Common myeloid progenitor, CD34-positive (primary cell): ENCODE measurements at regions of chr10 and their contacts with region 1.

Region 1: DNA sequence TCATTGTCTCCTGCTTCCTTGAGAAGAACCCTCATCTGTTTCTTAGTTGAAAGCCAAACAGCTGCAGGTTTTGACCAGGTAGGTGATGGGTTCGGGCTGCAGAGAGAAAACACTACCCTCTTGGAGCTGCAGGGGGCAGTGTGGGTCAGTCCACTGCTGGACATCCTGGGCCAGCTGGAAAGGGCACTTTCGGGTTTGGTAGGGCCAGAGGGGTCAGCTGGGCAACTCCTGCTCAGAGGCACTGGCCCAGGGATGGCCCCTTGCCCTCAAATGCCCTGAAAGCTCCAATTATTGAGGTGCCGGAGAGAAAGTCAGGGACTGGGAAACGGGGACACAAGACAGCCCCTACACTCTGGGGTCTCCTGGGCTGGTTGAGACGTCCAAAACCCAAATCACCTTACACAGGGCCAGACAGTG is 90.7 kb downstream of the MKI67 start:
- DNase-seq: peak in 1 of 3 donors; percentile 50
- H3K4me3 ChIP-seq: no peak overlapping the region
- H3K27ac ChIP-seq: no peak overlapping the region
- H3K4me1 ChIP-seq: no peaks in the 10 kb centered on the region
- H3K27me3 ChIP-seq: peaks cover 0 to 1% (median 0%) of the 10 kb centered on the region in 5 experiments

Region 2: DNA sequence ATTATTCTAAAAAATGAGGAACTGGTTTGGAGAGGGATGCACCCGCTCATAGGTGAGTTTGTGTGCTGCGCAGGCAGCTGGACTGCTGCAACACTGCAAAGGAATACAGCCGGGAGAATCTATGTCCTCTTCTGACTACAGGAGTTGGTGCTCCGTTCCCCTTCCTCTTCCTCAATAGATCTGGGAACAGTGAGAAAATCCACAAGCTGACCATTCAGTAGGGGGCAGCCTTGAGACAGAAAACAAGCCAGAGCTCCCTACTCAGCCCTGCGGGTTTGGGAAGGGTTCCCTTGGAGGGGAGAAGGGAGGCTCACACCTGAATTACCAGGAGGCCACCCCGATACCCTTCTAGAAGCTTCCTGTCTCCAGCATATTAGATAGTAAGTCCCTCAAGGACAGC is 385.9 kb before region 1 on chr10:
- CTCF ChIA-PET with region 1: no interaction called
- POLR2A ChIA-PET with region 1: no interaction called
- DNase-seq: no peak
- H3K4me3 ChIP-seq: no peak overlapping the region
- H3K27ac ChIP-seq: no peak overlapping the region
- H3K4me1 ChIP-seq: no peaks in the 10 kb centered on the region
- H3K27me3 ChIP-seq: peaks cover 0 to 7% (median 0%) of the 10 kb centered on the region in 5 experiments

Region 3: GRCh38 chr10:128047351-128047750 is 11.8 kb after region 1 on chr10:
- CTCF ChIA-PET with region 1: interaction called, 77 read pairs
- POLR2A ChIA-PET with region 1: interaction called, 13 read pairs
- DNase-seq: peak; percentile 79 to 90 (median 86)
- H3K4me3 ChIP-seq: peak overlapping the region in 6 of 7 experiments; percentile 57 to 84 (median 66)
- H3K27ac ChIP-seq: peak overlapping the region; percentile 84 to 91
- H3K4me1 ChIP-seq: peaks cover 33 to 70% (median 46%) of the 10 kb centered on the region in 4 experiments
- H3K27me3 ChIP-seq: no peaks in the 10 kb centered on the region

Region 4: GRCh38 chr10:128064108-128064969 is 28.8 kb after region 1 on chr10:
- CTCF ChIA-PET with region 1: interaction called, 288 read pairs
- POLR2A ChIA-PET with region 1: interaction called, 16 read pairs
- DNase-seq: peak; percentile 94 to 99 (median 98)
- H3K4me3 ChIP-seq: peak overlapping the region in 4 of 7 experiments; percentile 8 to 57 (median 34)
- H3K27ac ChIP-seq: peak overlapping the region; percentile 51 to 84
- H3K4me1 ChIP-seq: peaks cover 26 to 74% (median 49%) of the 10 kb centered on the region in 4 experiments
- H3K27me3 ChIP-seq: no peaks in the 10 kb centered on the region

Region 5: GRCh38 chr10:128078136-128078969 is 42.8 kb after region 1 on chr10:
- CTCF ChIA-PET with region 1: interaction called, 288 read pairs
- POLR2A ChIA-PET with region 1: interaction called, 5 read pairs
- DNase-seq: peak in 2 of 3 donors; percentile 53 to 60
- H3K4me3 ChIP-seq: no peak overlapping the region
- H3K27ac ChIP-seq: no peak overlapping the region
- H3K4me1 ChIP-seq: peaks cover 0 to 11% (median 5%) of the 10 kb centered on the region in 4 experiments
- H3K27me3 ChIP-seq: peaks cover 0 to 1% (median 0%) of the 10 kb centered on the region in 5 experiments